ENCODE measurements at regions of chr7 and their contacts with region 1.

Region 1: DNA sequence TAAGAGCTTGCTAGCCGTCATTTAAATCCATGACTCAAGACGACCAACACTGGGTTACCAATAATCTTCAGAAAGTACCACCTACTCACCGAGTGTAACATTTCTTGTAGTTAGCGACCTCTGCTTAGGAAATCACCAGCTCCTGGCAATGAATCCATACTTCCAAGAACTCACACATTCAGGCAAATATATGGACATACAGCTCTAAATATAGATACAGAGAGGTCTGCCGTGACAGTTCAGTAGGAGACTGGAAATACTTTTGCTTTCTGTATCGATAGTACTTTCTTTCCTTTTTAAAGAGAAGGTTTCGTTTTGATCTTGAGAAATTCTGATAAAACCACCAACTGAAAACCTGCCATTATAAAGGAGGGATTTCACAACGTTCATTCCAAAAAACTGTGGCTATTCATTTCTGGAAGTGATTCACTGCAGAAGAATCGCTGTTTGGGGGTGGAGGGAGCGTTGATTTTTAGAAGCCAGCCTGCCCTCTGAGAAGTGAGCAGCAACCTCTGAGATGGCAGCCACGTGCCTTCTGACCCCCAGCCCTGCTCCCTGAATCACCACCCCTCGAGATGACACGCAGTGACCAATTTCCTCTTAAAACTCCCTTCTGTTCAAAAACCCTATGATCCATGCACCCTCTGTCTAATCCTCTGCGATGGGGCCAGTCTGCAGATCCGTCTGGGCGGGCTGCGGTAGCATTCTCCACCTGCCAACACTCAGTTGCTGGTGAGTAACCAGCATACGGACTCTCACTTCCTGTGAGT is 179.0 kb upstream of the KLF14 start:
- DNase-seq: peak; percentile 89
- ATAC-seq: peak; percentile 92
- H3K4me3 Mint-ChIP-seq: peak overlapping the region; percentile 91
- H3K27ac Mint-ChIP-seq: peak overlapping the region; percentile 99
- H3K4me1 Mint-ChIP-seq: peaks cover 89% of the 10 kb centered on the region
- H3K27me3 Mint-ChIP-seq: no peaks in the 10 kb centered on the region

Region 2: GRCh38 chr7:130865408-130866236 is 47.4 kb before region 1 on chr7:
- CTCF ChIA-PET with region 1: no interaction called
- POLR2A ChIA-PET with region 1: no interaction called
- DNase-seq: peak; percentile 48
- ATAC-seq: no peak
- H3K4me3 Mint-ChIP-seq: no peak overlapping the region
- H3K27ac Mint-ChIP-seq: no peak overlapping the region
- H3K4me1 Mint-ChIP-seq: no peaks in the 10 kb centered on the region
- H3K27me3 Mint-ChIP-seq: no peaks in the 10 kb centered on the region

Region 3: GRCh38 chr7:130929896-130930659 is 17.0 kb after region 1 on chr7:
- CTCF ChIA-PET with region 1: interaction called, 22 read pairs
- POLR2A ChIA-PET with region 1: interaction called, 6 read pairs
- DNase-seq: no peak
- ATAC-seq: no peak
- H3K4me3 Mint-ChIP-seq: no peak overlapping the region
- H3K27ac Mint-ChIP-seq: peak overlapping the region; percentile 40
- H3K4me1 Mint-ChIP-seq: peaks cover 61% of the 10 kb centered on the region
- H3K27me3 Mint-ChIP-seq: no peaks in the 10 kb centered on the region

Measured in activated CD8-positive, alpha-beta T cell treated with anti-CD3 and anti-CD28 coated beads, Interleukin-2, amount 10 ng/mL, durations not matched to agents 7 days and 5 days (primary cell).